A549 (cell line): ENCODE measurements at regions of chr1 and their contacts with region 1.

Region 1: GRCh38 chr1:201828820-201829774 is at the start of gene IPO9:
- DNase-seq: peak; percentile 94 to 96
- ATAC-seq: peak; percentile 93 to 96
- H3K4me3 ChIP-seq: peak within 1 kb of the TSS; percentile 95
- H3K27ac ChIP-seq: peak within 1 kb of the TSS; percentile 96 to 99
- H3K4me1 ChIP-seq: peaks cover 20% of the 10 kb centered on the region
- CTCF ChIP-seq: peak; percentile 89
- EP300 ChIP-seq: no peak
- POLR2A ChIP-seq: peak; percentile 80
- RAD21 ChIP-seq: peak in 1 of 2 experiments; percentile 20; a peak in 1 of 5 replicates
- polyA plus RNA-seq, gene IPO9: 72.3 and 77.5 TPM in 2 replicates

Region 2: GRCh38 chr1:201807958-201808632 is 21.0 kb before region 1 on chr1:
- CTCF ChIA-PET with region 1: interaction called, 10 read pairs
- POLR2A ChIA-PET with region 1: no interaction called
- DNase-seq: no peak
- ATAC-seq: no peak
- H3K4me3 ChIP-seq: no peak overlapping the region
- H3K27ac ChIP-seq: no peak overlapping the region
- H3K4me1 ChIP-seq: no peaks in the 10 kb centered on the region
- CTCF ChIP-seq: no peak
- EP300 ChIP-seq: no peak
- POLR2A ChIP-seq: no peak
- RAD21 ChIP-seq: no peak